H1 (cell line): ENCODE measurements at regions of chr22 and their contacts with region 1.

Region 1: GRCh38 chr22:43826142-43827002 is 14.3 kb upstream of the EFCAB6 start:
- DNase-seq: peak in 1 of 2 experiments; percentile 43
- H3K4me3 ChIP-seq: no peak overlapping the region
- H3K27ac ChIP-seq: no peak overlapping the region
- H3K4me1 ChIP-seq: peaks cover 2 to 26% (median 15%) of the 10 kb centered on the region in 4 experiments
- H3K27me3 ChIP-seq: no peaks in the 10 kb centered on the region
- CTCF ChIP-seq: peak in 1 of 3 experiments; percentile 2; a peak in 1 of 4 replicates
- EP300 ChIP-seq: no peak
- POLR2A ChIP-seq: no peak
- RAD21 ChIP-seq: peak; percentile 14 to 40; a peak in 2 of 4 replicates

Region 2: GRCh38 chr22:43812149-43812842 is 14.1 kb before region 1 on chr22 and contains the start of gene EFCAB6:
- CTCF ChIA-PET with region 1: interaction called, 4 read pairs
- POLR2A ChIA-PET with region 1: interaction called, 20 read pairs
- DNase-seq: peak; percentile 83 to 93
- H3K4me3 ChIP-seq: peak within 1 kb of the TSS; percentile 67 to 86 (median 76)
- H3K27ac ChIP-seq: peak within 1 kb of the TSS; percentile 90
- H3K4me1 ChIP-seq: peaks cover 0 to 13% (median 5%) of the 10 kb centered on the region in 4 experiments; a peak in 6 of 7 replicates
- H3K27me3 ChIP-seq: no peaks in the 10 kb centered on the region
- CTCF ChIP-seq: no peak
- EP300 ChIP-seq: no peak
- POLR2A ChIP-seq: peak in 1 of 2 experiments; percentile 77; a peak in 2 of 3 replicates
- RAD21 ChIP-seq: 0 out of 4 replicates have a peak, but pooled peaks of 1 of the 2 experiments have one; percentile 0
- total RNA-seq, gene EFCAB6: 1.5 and 1.7 TPM in 2 replicates

Region 3: DNA sequence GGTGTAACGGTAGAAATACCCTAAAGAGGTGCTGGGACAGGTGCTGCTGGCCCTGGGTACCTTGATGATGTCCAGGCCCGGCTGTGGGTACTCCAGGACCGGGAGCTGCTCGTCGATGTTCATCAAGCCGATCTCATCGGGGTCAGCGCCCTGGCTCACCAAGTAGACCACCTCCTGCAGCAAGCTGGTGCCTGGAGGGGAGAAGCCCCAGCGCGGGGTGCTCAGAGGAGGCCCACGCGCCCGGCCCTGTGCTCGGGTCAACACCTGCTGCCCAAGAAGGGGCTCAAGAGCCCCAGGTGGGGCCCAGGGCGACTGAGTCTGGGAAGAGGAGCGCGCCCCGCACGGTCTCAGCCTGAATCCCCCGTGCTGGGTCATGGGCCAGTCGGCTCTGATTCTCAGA is 15.4 kb after region 1 on chr22:
- CTCF ChIA-PET with region 1: interaction called, 12 read pairs
- POLR2A ChIA-PET with region 1: interaction called, 7 read pairs
- DNase-seq: no peak
- H3K4me3 ChIP-seq: no peak overlapping the region
- H3K27ac ChIP-seq: no peak overlapping the region
- H3K4me1 ChIP-seq: peaks cover 0 to 12% (median 2%) of the 10 kb centered on the region in 4 experiments; a peak in 4 of 7 replicates
- H3K27me3 ChIP-seq: no peaks in the 10 kb centered on the region
- CTCF ChIP-seq: no peak
- EP300 ChIP-seq: no peak
- POLR2A ChIP-seq: no peak
- RAD21 ChIP-seq: no peak

Region 4: DNA sequence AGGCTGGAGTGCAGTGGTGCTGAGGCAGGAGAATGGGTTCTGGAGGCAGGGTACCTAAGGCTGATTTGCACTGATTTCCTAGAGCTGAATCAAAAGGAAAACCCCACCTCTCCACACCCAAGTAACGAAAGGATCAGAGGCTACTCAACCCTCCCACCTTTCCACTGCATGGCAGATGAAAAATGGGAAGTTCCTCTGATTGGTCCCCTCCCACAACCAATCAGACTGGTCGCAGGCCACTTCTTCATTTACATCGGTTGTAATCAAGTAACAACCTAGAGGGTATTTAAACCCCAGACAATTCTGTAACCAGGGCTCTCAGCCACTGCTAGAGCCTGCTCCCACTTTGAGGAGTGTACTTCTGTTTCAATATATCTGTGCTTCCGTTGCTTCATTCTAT is 179.2 kb after region 1 on chr22:
- CTCF ChIA-PET with region 1: no interaction called
- POLR2A ChIA-PET with region 1: no interaction called
- DNase-seq: no peak
- H3K4me3 ChIP-seq: no peak overlapping the region
- H3K27ac ChIP-seq: no peak overlapping the region
- H3K4me1 ChIP-seq: no peaks in the 10 kb centered on the region
- H3K27me3 ChIP-seq: no peaks in the 10 kb centered on the region; a peak in 1 of 7 replicates
- CTCF ChIP-seq: no peak
- EP300 ChIP-seq: no peak
- POLR2A ChIP-seq: no peak
- RAD21 ChIP-seq: no peak